Activated CD4-positive, alpha-beta T cell treated with anti-CD3 and anti-CD28 coated beads for 36 hours (primary cell): ENCODE measurements at regions of chr3 and their contacts with region 1.

Region 1: GRCh38 chr3:52154117-52155094 is at the start of gene POC1A:
- DNase-seq: peak; percentile 95
- ATAC-seq: peak; percentile 89
- H3K4me3 Mint-ChIP-seq: peak within 1 kb of the TSS; percentile 80
- H3K27ac Mint-ChIP-seq: peak within 1 kb of the TSS; percentile 93
- H3K4me1 Mint-ChIP-seq: peaks cover 19% of the 10 kb centered on the region
- H3K27me3 Mint-ChIP-seq: no peaks in the 10 kb centered on the region
- total RNA-seq, gene POC1A: 23.4 to 26.1 TPM

Region 2: DNA sequence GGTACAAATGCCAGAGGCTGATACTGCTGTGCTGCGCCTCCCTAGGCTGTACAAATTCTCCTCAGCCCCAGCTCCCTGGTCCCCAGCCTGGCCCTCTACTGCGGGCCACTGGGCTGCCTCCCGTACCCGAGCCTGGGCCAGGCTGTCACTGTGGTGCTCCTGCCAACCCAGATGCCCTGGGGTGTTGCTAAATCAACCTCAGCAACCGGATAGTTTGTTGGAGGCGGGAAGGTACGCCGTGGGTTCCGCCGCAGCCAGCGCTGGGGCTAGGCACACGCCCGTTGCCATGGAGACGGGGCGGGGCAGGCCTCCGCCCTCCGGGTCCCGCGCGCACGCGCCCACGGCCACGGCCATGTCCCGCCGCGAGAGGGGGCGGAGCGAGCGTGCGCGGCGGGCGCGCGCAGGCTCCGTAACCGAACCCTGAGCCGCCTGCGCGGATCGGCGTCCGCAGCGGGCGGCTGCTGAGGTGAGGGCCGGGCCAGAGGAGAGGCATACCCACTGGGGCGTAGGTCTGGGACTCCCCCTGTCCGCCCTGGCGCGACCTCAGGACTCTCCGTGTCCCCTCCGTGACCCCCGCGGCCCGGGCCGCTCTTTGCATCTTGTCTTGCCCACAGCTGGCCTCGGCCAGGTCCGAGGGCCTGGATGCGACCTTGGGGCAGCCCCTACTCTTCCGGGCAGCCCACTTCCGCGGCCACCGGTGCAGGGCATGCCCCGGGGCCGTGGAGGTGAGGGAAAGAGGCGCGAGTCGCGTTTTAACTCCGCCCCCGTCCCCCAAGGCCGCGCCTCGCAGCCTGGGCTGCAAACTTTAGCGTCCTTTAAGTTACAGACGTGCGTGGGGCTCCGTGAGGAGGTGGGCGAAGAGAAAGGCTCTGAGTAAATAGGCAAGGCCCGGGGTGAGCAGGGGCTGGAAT is 483.3 kb before region 1 on chr3 and contains the start of gene TEX264:
- CTCF ChIA-PET with region 1: no interaction called
- POLR2A ChIA-PET with region 1: no interaction called
- intact Hi-C with region 1: loop called in 1 of 2 experiments (anchors 1 kb)
- DNase-seq: peak; percentile 94
- ATAC-seq: peak; percentile 66
- H3K4me3 Mint-ChIP-seq: peak within 1 kb of the TSS; percentile 79
- H3K27ac Mint-ChIP-seq: peak within 1 kb of the TSS; percentile 74
- H3K4me1 Mint-ChIP-seq: peaks cover 56% of the 10 kb centered on the region
- H3K27me3 Mint-ChIP-seq: no peaks in the 10 kb centered on the region
- total RNA-seq, gene TEX264: 35.3 to 37.4 TPM

Region 3: DNA sequence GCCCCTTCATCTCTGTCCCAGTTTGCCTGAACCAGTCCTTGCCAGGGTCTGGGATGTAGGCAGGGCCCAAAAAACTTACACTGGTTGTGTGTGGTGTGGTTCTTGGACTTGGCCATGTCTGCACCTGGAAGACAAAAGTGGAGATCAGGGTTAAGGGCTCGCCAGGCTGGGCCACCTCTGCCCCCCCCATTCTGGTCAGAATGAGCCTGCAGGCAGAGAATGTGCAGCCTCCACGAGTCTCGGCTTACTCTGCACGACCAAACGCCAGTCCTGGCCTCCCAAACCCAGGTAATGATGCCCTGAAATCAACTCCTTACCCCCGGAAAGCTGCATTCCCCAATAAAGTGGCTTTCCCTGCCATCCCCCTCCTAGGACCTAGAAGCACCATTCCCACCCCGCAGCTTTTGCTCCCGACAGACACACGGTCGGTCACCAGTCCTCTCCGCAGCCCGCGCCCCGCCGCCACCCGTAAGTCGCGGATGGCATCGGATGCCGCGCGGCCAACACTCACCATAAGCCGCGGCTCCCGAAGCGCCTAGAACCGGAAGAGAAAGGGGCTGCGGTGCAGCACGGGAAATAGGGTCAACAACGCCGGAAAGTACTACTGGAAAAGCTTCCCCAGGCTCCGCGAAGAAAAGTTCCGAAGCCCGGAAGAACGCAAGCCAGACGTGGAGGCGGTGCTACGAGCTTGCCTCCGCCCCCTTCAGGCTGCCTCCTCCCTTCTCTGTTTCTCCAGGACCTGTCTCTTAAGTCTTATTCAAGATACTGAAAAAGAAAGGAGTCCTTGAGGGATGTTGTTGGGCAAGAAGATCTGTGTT is 158.9 kb before region 1 on chr3 and contains the start of gene RPL29:
- CTCF ChIA-PET with region 1: interaction called, 7 read pairs
- POLR2A ChIA-PET with region 1: interaction called, 10 read pairs
- intact Hi-C with region 1: loop called in 1 of 2 experiments (anchors 1 kb)
- DNase-seq: peak; percentile 96
- ATAC-seq: peak; percentile 95
- H3K4me3 Mint-ChIP-seq: peak within 1 kb of the TSS; percentile 100
- H3K27ac Mint-ChIP-seq: peak within 1 kb of the TSS; percentile 100
- H3K4me1 Mint-ChIP-seq: peaks cover 26% of the 10 kb centered on the region
- H3K27me3 Mint-ChIP-seq: no peaks in the 10 kb centered on the region
- total RNA-seq, gene RPL29: 1,975 to 2,071 TPM

Region 4: GRCh38 chr3:52136513-52136912 is 17.9 kb before region 1 on chr3:
- CTCF ChIA-PET with region 1: no interaction called
- POLR2A ChIA-PET with region 1: no interaction called
- intact Hi-C with region 1: no loop called
- DNase-seq: no peak
- ATAC-seq: no peak
- H3K4me3 Mint-ChIP-seq: no peak overlapping the region
- H3K27ac Mint-ChIP-seq: no peak overlapping the region
- H3K4me1 Mint-ChIP-seq: no peaks in the 10 kb centered on the region
- H3K27me3 Mint-ChIP-seq: no peaks in the 10 kb centered on the region

Region 5: DNA sequence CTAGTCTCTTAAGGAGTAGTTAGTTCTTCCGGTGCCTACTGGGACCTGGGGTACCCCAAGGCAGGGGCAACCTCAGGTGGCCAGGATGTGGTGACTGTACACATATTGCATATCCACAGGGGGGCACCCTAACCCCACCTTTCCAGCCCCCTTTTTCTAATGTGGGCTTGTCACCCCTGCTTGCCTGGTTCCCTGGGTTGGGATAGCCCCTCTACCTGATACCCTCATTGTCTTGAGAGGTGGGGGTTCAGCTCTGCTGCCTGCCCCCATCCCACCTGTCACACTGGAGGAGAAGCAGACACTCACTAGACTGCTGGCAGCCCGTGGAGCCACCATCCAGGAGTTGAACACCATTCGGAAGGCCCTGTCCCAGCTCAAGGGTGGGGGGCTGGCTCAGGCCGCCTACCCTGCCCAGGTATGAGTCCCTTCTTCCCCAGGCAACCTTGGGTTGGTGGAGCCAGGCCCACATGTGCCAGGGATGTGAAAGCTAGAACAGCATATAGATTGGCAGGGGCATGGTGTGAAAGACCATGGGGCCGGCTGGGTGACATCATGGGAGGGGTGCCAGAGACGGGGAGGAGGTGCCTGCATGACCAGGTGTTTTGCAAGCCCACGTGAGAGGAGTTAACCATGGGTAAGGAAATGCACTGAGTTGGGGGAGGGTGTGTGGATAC is 137.2 kb after region 1 on chr3:
- CTCF ChIA-PET with region 1: no interaction called
- POLR2A ChIA-PET with region 1: no interaction called
- intact Hi-C with region 1: loop called in 1 of 2 experiments (anchors 1 kb)
- DNase-seq: peak; percentile 66
- ATAC-seq: no peak
- H3K4me3 Mint-ChIP-seq: no peak overlapping the region
- H3K27ac Mint-ChIP-seq: no peak overlapping the region
- H3K4me1 Mint-ChIP-seq: peaks cover 16% of the 10 kb centered on the region
- H3K27me3 Mint-ChIP-seq: no peaks in the 10 kb centered on the region

Region 6: DNA sequence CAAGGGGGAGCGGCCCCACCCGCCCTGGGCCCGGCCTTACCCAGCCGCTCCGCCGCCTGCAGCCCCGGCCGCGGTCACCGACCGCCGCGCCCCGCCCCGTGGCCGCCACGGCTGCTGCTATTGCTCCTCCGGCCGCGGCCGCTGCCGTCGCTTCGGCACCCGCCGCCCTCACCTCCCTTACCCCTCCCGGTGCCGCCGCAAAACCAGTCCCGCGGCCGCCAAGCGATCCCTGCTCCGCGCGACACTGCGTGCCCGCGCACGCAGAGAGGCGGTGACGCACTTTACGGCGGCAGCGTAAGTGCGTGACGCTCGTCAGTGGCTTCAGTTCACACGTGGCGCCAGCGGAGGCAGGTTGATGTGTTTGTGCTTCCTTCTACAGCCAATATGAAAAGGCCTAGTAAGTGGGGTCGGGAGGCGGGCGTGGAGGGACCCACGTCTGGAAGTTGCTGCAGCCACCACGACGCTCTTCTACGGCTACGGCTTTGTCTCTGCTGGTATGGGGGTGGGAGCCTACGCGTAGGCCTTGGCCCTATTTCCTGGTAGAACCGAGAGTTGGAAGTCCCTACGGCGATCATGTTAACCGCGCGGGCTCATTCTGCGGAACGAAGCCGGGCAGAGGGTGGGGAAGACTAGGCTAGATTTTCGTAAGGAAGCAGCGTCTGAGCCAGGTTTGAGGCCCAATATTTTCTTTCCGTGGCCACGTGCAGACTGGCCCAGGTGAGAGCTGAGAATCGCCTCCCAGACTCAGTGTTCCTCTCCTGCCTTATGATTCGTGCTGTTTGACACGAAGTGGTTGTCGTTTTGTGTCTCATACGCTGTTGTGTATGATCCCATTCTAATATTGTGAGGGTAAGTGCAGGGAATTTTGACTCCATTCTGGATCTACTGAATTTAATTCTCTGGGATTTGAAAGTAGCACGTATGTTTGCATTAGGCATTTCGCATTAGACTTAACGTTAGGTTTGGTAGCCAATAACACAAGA is 531.6 kb after region 1 on chr3 and contains the starts of genes GNL3 and PBRM1:
- CTCF ChIA-PET with region 1: no interaction called
- POLR2A ChIA-PET with region 1: no interaction called
- intact Hi-C with region 1: loop called in 1 of 2 experiments (anchors 5 kb)
- DNase-seq: peak; percentile 97
- ATAC-seq: peak; percentile 70
- H3K4me3 Mint-ChIP-seq: peak within 1 kb of the TSS; percentile 99
- H3K27ac Mint-ChIP-seq: peak within 1 kb of the TSS; percentile 99
- H3K4me1 Mint-ChIP-seq: peaks cover 75% of the 10 kb centered on the region
- H3K27me3 Mint-ChIP-seq: no peaks in the 10 kb centered on the region
- total RNA-seq, gene GNL3: 206 to 218 TPM
- total RNA-seq, gene PBRM1: 57.6 to 59.8 TPM